Heart left ventricle (tissue), 16 donors: ENCODE measurements at regions of chr1 and their contacts with region 1.

Region 1: GRCh38 chr1:234544087-234544579 is 65.2 kb upstream of the TARBP1 start:
- DNase-seq: peak in 4 of 5 donors; percentile 77 to 85 (median 81)
- ATAC-seq: peak; percentile 81 to 87 (median 82)
- H3K4me3 ChIP-seq: peak overlapping the region in 2 of 12 donors; percentile 16 to 18
- H3K27ac ChIP-seq: peak overlapping the region; percentile 69 to 99 (median 89)
- H3K4me1 ChIP-seq: peaks cover 12 to 77% (median 48%) of the 10 kb centered on the region in 12 donors
- H3K27me3 ChIP-seq: no peaks in the 10 kb centered on the region
- CTCF ChIP-seq: no peak
- POLR2A ChIP-seq: no peak

Region 2: DNA sequence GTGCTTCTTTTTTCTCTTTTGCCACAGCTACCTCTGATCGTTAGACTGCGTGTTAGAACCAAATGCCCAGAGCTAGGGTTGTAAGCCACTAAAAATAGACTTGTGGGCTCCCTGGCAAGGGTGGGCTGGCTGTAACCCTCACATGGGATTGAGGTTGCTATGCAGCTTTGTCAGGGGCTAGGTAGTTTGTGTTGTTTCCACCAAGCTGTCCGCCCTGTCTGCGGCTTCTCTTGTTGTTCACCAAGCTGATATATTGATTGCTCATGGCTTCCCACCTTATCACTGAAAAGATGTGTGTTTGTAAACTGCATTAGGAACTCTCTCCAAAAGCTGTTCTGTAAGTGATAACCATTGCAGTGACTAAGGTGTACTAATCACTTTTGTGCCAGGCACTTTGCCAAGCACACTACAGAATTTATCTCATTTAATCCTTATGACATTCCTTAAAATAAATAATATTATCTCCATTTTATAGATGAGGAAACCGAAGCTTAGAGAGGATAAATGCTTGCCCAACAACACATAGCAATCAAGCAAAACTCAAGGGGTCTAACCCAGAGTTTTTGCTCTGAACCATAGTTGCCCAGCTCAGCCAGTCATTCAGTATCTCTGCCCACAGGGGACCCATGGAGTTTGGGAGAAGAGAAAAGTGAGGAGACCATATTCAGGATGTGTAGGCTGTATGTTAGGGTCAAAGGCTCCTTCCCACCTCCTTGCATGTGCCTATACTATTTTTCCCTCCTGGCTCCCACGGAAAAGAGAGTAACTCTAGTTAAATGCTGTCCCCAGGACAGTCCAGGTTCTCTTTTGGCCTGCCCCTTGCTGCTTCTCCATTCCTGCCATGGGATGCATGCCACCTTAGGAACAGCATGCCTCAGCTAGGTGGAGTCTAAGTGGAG is 23.0 kb before region 1 on chr1:
- intact Hi-C with region 1: loop called in 1 of 10 experiments (anchors 2 kb)
- DNase-seq: no peak
- ATAC-seq: peak in 2 of 4 donors; percentile 20 to 23
- H3K4me3 ChIP-seq: no peak overlapping the region
- H3K27ac ChIP-seq: peak overlapping the region; percentile 1 to 95 (median 78)
- H3K4me1 ChIP-seq: peaks cover 2 to 75% (median 34%) of the 10 kb centered on the region in 12 donors
- H3K27me3 ChIP-seq: no peaks in the 10 kb centered on the region
- CTCF ChIP-seq: no peak
- POLR2A ChIP-seq: no peak

Region 3: GRCh38 chr1:234579967-234580366 is 35.8 kb after region 1 on chr1:
- intact Hi-C with region 1: loop called in 8 of 10 experiments (anchors 5 kb)
- DNase-seq: no peak
- ATAC-seq: no peak
- H3K4me3 ChIP-seq: no peak overlapping the region
- H3K27ac ChIP-seq: no peak overlapping the region
- H3K4me1 ChIP-seq: peaks cover 4 to 37% (median 23%) of the 10 kb centered on the region in 12 donors
- H3K27me3 ChIP-seq: no peaks in the 10 kb centered on the region
- CTCF ChIP-seq: peak in 2 of 12 donors; percentile 4 to 21
- POLR2A ChIP-seq: no peak